H1 (cell line): ENCODE measurements at regions of chr7 and their contacts with region 1.

Region 1: GRCh38 chr7:23315366-23315765 is 16.2 kb downstream of the MALSU1 start:
- DNase-seq: no peak
- H3K4me3 ChIP-seq: no peak overlapping the region
- H3K27ac ChIP-seq: no peak overlapping the region
- H3K4me1 ChIP-seq: no peaks in the 10 kb centered on the region
- H3K27me3 ChIP-seq: no peaks in the 10 kb centered on the region
- CTCF ChIP-seq: no peak
- EP300 ChIP-seq: no peak
- POLR2A ChIP-seq: no peak
- RAD21 ChIP-seq: no peak

Region 2: GRCh38 chr7:23287612-23288011 is 27.8 kb before region 1 on chr7:
- CTCF ChIA-PET with region 1: no interaction called
- POLR2A ChIA-PET with region 1: no interaction called
- DNase-seq: no peak
- H3K4me3 ChIP-seq: no peak overlapping the region
- H3K27ac ChIP-seq: no peak overlapping the region
- H3K4me1 ChIP-seq: peaks cover 0 to 2% (median 0%) of the 10 kb centered on the region in 4 experiments; a peak in 1 of 7 replicates
- H3K27me3 ChIP-seq: no peaks in the 10 kb centered on the region
- CTCF ChIP-seq: no peak
- EP300 ChIP-seq: no peak
- POLR2A ChIP-seq: no peak
- RAD21 ChIP-seq: no peak

Region 3: DNA sequence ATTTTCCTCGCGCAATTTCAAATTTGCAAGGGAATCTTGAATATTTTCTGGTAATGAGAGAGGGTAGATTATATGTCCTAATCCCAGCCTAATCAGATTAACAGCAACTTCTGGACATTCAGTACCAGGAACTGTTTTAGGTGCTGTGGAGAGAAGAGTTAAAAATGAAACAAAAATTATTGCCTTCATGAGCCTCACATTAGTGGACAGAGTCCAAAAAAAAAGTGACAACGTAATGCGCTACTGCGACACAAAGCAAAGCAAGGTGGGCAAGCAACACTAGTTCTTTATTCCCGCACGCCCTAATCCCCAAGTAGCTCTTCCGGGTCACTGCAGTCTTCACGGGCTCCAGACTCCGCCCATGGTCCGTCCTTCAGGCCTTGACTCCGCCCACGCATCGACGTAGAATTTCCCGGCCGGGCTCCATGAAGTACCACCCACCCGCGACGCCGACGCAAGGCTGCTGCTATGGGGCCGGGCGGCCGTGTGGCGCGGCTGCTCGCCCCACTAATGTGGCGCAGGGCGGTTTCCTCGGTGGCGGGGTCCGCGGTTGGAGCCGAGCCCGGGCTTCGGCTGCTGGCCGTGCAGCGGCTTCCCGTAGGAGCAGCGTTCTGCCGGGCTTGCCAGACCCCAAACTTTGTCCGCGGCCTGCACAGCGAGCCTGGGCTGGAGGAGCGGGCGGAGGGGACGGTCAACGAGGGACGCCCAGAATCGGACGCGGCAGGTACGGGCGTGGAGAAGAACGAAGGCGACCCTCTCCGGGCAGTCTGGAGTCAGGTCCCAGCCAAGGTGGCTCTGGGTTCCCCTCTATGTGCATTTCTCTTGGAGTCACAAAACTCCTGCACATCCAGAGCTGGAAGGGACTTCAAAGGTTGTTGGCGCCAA is 16.2 kb before region 1 on chr7 and contains the start of gene MALSU1:
- CTCF ChIA-PET with region 1: interaction called, 3 read pairs
- POLR2A ChIA-PET with region 1: interaction called, 23 read pairs
- DNase-seq: peak; percentile 75 to 97
- H3K4me3 ChIP-seq: peak within 1 kb of the TSS; percentile 85 to 98 (median 94)
- H3K27ac ChIP-seq: peak within 1 kb of the TSS; percentile 61; the same call in 1 of the 2 replicates
- H3K4me1 ChIP-seq: peaks cover 0 to 4% (median 2%) of the 10 kb centered on the region in 4 experiments; a peak in 3 of 7 replicates
- H3K27me3 ChIP-seq: no peaks in the 10 kb centered on the region; a peak in 1 of 7 replicates
- CTCF ChIP-seq: no peak
- EP300 ChIP-seq: 0 out of 3 replicates have a peak, but pooled peaks of 1 of the 2 experiments have one; percentile 37
- POLR2A ChIP-seq: peak; percentile 89 to 96
- RAD21 ChIP-seq: no peak
- total RNA-seq, gene MALSU1: 84.0 and 86.8 TPM in 2 replicates